A549 (cell line): ENCODE measurements at regions of chr6 and their contacts with region 1.

Region 1: DNA sequence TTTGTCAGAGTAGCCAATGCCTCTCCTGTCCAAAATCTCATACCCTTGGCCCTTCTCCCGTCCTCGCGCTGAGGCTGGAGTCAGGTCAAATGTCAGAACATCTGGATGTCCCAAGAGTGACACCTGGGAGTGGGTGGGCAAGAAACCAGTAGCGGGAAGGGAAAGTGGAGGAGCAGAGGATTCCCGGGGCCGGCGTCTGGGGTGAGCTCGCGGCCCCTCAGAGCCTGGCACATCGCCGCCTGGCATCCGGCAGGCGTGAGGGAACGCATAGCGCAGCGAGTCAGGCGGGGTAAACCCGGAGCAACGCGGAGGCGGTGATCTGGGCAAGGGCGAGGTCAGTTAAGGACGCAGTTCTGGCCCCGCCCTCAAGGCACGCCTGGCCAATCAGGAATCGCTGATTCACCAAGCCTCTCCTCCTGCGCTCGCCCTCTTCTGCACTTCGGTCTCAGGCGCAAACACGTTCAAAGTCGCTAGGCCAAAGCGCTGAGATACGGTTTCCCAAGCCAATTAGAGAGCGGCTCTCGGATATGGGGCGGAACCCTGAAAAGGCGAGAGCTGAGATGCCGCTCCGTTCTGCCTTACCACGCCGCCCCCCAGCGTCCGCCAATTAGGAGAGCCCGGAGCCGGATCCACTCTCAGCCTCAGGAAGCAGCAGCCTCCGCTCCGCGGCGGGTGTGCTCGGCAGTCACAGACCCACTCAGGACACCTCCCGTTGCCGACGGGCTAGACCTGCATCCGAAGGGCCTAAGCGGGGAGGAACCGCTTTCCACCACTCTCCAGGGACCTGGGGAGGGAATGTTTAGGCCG is 22.5 kb downstream of the VPS52 start:
- DNase-seq: peak; percentile 70 to 97
- ATAC-seq: peak; percentile 95 to 96
- H3K4me3 ChIP-seq: peak overlapping the region; percentile 68
- H3K27ac ChIP-seq: peak overlapping the region; percentile 91 to 92
- H3K4me1 ChIP-seq: peaks cover 11% of the 10 kb centered on the region
- CTCF ChIP-seq: no peak
- EP300 ChIP-seq: no peak
- POLR2A ChIP-seq: peak; percentile 79
- RAD21 ChIP-seq: no peak

Region 2: GRCh38 chr6:33014841-33015634 is 234.1 kb before region 1 on chr6:
- CTCF ChIA-PET with region 1: interaction called, 20 read pairs
- POLR2A ChIA-PET with region 1: no interaction called
- DNase-seq: peak; percentile 47 to 75
- ATAC-seq: peak; percentile 61 to 85; a peak in 5 of 6 replicates
- H3K4me3 ChIP-seq: no peak overlapping the region
- H3K27ac ChIP-seq: no peak overlapping the region
- H3K4me1 ChIP-seq: no peaks in the 10 kb centered on the region
- CTCF ChIP-seq: peak; percentile 59
- EP300 ChIP-seq: no peak
- POLR2A ChIP-seq: no peak
- RAD21 ChIP-seq: peak; percentile 57 to 62

Region 3: GRCh38 chr6:33161354-33162331 is 87.5 kb before region 1 on chr6:
- CTCF ChIA-PET with region 1: interaction called, 31 read pairs
- POLR2A ChIA-PET with region 1: no interaction called
- DNase-seq: peak; percentile 37 to 74
- ATAC-seq: peak; percentile 87 to 94
- H3K4me3 ChIP-seq: peak overlapping the region; percentile 49
- H3K27ac ChIP-seq: peak overlapping the region; percentile 78 to 91
- H3K4me1 ChIP-seq: peaks cover 14% of the 10 kb centered on the region; the same call in 2 of the 3 replicates
- CTCF ChIP-seq: peak; percentile 72
- EP300 ChIP-seq: no peak
- POLR2A ChIP-seq: no peak
- RAD21 ChIP-seq: peak; percentile 35 to 55; a peak in 3 of 5 replicates

Region 4: GRCh38 chr6:33208091-33208967 is 40.8 kb before region 1 on chr6 and contains the start of gene RING1:
- CTCF ChIA-PET with region 1: interaction called, 11 read pairs
- POLR2A ChIA-PET with region 1: interaction called, 13 read pairs
- DNase-seq: peak; percentile 57 to 72
- ATAC-seq: peak; percentile 43 to 53; a peak in 5 of 6 replicates
- H3K4me3 ChIP-seq: peak within 1 kb of the TSS; percentile 87
- H3K27ac ChIP-seq: peak within 1 kb of the TSS; percentile 97 to 100
- H3K4me1 ChIP-seq: peaks cover 38% of the 10 kb centered on the region
- CTCF ChIP-seq: no peak
- EP300 ChIP-seq: no peak
- POLR2A ChIP-seq: peak; percentile 75
- RAD21 ChIP-seq: no peak
- polyA plus RNA-seq, gene RING1: 12.7 and 14.6 TPM in 2 replicates

Region 5: GRCh38 chr6:33264015-33264414 is 14.9 kb after region 1 on chr6:
- CTCF ChIA-PET with region 1: interaction called, 33 read pairs
- POLR2A ChIA-PET with region 1: interaction called, 4 read pairs
- DNase-seq: no peak
- ATAC-seq: no peak; a peak in 1 of 6 replicates
- H3K4me3 ChIP-seq: no peak overlapping the region
- H3K27ac ChIP-seq: no peak overlapping the region
- H3K4me1 ChIP-seq: peaks cover 4% of the 10 kb centered on the region; the same call in 1 of the 3 replicates
- CTCF ChIP-seq: no peak
- EP300 ChIP-seq: no peak
- POLR2A ChIP-seq: no peak
- RAD21 ChIP-seq: no peak

Region 6: DNA sequence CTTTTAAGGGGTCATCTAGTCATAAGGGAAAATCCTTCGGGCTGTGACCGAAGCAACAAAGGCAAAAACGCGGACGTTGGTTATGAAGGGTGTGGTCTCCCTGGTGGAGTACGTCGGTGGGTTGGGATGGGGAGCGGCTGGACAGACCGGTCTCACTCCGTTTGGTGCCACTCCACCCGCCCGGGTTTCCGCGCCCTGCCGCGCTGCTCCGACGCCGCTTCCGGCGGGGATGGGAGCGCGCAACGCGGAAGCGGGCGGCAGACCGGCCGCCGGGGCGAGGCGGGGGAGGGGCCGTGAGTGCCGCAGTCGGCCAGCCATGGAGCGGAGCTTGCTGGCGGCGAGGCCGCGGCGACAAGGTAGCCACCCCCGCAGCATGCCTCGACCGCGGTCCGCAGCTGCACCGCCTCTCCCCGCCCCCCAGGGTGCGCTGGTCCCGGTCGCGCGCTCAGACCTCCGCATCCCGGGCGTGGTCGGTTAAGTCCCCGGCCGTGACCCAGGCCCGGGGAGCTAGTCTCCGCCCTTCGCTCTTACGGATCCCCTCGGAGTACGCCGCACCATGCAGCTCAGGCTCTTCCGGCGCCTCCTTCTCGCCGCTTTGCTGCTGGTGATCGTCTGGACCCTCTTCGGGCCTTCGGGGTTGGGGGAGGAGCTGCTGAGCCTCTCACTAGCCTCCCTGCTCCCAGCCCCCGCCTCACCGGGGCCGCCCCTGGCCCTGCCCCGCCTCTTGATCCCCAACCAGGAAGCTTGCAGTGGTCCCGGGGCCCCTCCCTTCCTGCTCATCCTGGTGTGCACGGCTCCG is 27.9 kb after region 1 on chr6 and contains the start of gene B3GALT4:
- CTCF ChIA-PET with region 1: interaction called, 12 read pairs
- POLR2A ChIA-PET with region 1: interaction called, 16 read pairs
- DNase-seq: peak; percentile 46 to 73
- ATAC-seq: peak; percentile 52 to 65
- H3K4me3 ChIP-seq: peak within 1 kb of the TSS; percentile 87
- H3K27ac ChIP-seq: peak within 1 kb of the TSS; percentile 68 to 97
- H3K4me1 ChIP-seq: peaks cover 41% of the 10 kb centered on the region
- CTCF ChIP-seq: no peak; the same call in 2 of the 3 replicates
- EP300 ChIP-seq: no peak
- POLR2A ChIP-seq: 0 out of 2 replicates have a peak, but pooled peaks have one; percentile 21
- RAD21 ChIP-seq: no peak
- polyA plus RNA-seq, gene B3GALT4: 0.54 and 0.74 TPM in 2 replicates

Region 7: GRCh38 chr6:33312058-33312408 is 62.9 kb after region 1 on chr6:
- CTCF ChIA-PET with region 1: no interaction called
- POLR2A ChIA-PET with region 1: no interaction called
- DNase-seq: no peak
- ATAC-seq: no peak
- H3K4me3 ChIP-seq: peak overlapping the region; percentile 74
- H3K27ac ChIP-seq: peak overlapping the region; percentile 19 to 97; a peak in 4 of 6 replicates
- H3K4me1 ChIP-seq: peaks cover 23% of the 10 kb centered on the region
- CTCF ChIP-seq: no peak
- EP300 ChIP-seq: no peak
- POLR2A ChIP-seq: no peak
- RAD21 ChIP-seq: no peak